ENCODE measurements at regions of chr9 and their contacts with region 1.

Region 1: GRCh38 chr9:101458955-101459631 is 23.5 kb upstream of the ALDOB start:
- DNase-seq: peak; percentile 88
- H3K4me3 ChIP-seq: no peak overlapping the region
- CTCF ChIP-seq: peak; percentile 93

Region 2: GRCh38 chr9:101139082-101139481 is 320.0 kb before region 1 on chr9:
- in situ Hi-C with region 1: no loop called
- DNase-seq: no peak
- H3K4me3 ChIP-seq: no peak overlapping the region
- CTCF ChIP-seq: no peak

Region 3: GRCh38 chr9:101398068-101398929 is 60.8 kb before region 1 on chr9 and contains the starts of genes MRPL50 and ZNF189:
- in situ Hi-C with region 1: no loop called
- DNase-seq: peak; percentile 99
- H3K4me3 ChIP-seq: peak within 1 kb of the TSS; percentile 59
- CTCF ChIP-seq: no peak

Region 4: GRCh38 chr9:101530077-101530711 is 71.1 kb after region 1 on chr9:
- in situ Hi-C with region 1: loop called (anchors 10 kb)
- DNase-seq: peak; percentile 79
- H3K4me3 ChIP-seq: no peak overlapping the region
- CTCF ChIP-seq: peak; percentile 83

Measured in astrocyte of the spinal cord (primary cell).